ENCODE measurements at regions of chr7 and their contacts with region 1.

Region 1: GRCh38 chr7:35716038-35716803 is 21.3 kb upstream of the HERPUD2 start:
- DNase-seq: peak in 1 of 5 donors; percentile 40
- H3K4me3 ChIP-seq: peak overlapping the region in 2 of 3 donors; percentile 20 to 43
- H3K27ac ChIP-seq: peak overlapping the region in 1 of 2 donors; percentile 3
- H3K4me1 ChIP-seq: no peaks in the 10 kb centered on the region
- H3K27me3 ChIP-seq: no peaks in the 10 kb centered on the region
- CTCF ChIP-seq: no peak

Region 2: GRCh38 chr7:35906191-35906908 is 190.1 kb after region 1 on chr7:
- intact Hi-C with region 1: loop called (anchors 10 kb)
- DNase-seq: peak in 4 of 5 donors; percentile 72 to 89 (median 84)
- H3K4me3 ChIP-seq: no peak overlapping the region
- H3K27ac ChIP-seq: no peak overlapping the region
- H3K4me1 ChIP-seq: no peaks in the 10 kb centered on the region
- H3K27me3 ChIP-seq: no peaks in the 10 kb centered on the region
- CTCF ChIP-seq: peak; percentile 92